PC-3 (cell line): ENCODE measurements at regions of chr10 and their contacts with region 1.

Region 1: GRCh38 chr10:45023426-45023825 is 22.7 kb downstream of the ZNF22 start:
- DNase-seq: no peak
- ATAC-seq: no peak
- H3K4me3 ChIP-seq: no peak overlapping the region
- H3K27ac ChIP-seq: no peak overlapping the region
- H3K4me1 ChIP-seq: no peaks in the 10 kb centered on the region
- H3K27me3 ChIP-seq: peaks cover 6% of the 10 kb centered on the region; the same call in 1 of the 2 replicates
- CTCF ChIP-seq: no peak

Region 2: DNA sequence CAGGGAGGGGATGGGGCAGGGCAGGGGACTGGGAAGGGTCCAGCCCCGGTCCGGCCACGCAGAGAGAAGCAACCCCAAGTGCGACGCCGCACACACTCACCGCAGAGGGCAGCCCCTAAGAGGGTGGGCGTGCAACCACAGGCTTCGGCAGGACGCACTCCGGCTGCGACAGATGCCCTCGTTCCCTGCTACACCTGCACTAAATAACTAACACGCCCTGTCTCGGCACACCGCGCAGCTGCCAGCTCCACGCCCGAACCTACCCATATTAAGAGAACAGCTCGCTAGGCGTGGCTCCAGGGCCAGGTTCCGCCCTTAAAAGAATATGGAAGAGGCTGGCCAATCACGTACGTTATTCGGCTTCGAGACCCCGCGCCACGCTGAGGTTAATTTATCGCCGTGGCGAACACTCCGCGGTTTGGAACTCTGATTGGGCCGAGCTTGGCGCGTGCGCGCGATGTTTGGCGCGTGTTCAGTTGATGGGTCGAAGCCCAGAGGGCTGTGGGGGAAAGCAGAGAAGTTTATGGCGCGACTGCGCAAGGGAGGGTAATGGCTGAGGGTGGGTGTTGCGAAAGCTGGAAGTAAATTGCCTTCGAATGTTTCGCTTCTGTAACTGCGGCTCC is 200.9 kb after region 1 on chr10:
- CTCF ChIA-PET with region 1: no interaction called
- POLR2A ChIA-PET with region 1: interaction called, 12 read pairs
- intact Hi-C with region 1: no loop called
- DNase-seq: no peak
- ATAC-seq: no peak
- H3K4me3 ChIP-seq: no peak overlapping the region
- H3K27ac ChIP-seq: no peak overlapping the region
- H3K4me1 ChIP-seq: no peaks in the 10 kb centered on the region
- H3K27me3 ChIP-seq: peaks cover 33% of the 10 kb centered on the region; the same call in 1 of the 2 replicates
- CTCF ChIP-seq: no peak

Region 3: DNA sequence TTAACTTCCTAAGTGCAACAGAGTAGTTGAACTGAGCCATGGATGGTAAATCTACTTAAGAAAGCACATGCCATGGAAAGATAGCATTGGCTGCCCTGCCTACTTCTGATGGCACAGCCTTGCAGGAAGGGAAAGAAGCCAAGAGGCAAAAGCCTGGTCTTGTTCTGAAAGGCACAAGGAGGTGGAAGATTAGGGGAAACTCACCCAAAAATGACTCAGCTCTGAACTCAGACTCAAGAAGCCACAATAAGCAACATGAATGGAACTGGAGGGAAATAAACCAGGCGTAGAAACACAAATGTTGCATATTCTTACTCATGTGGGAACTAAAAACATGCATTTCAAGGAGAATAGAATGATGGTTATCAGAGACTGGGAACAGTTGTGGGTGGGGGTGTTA is 329.8 kb after region 1 on chr10:
- CTCF ChIA-PET with region 1: no interaction called
- POLR2A ChIA-PET with region 1: no interaction called
- intact Hi-C with region 1: no loop called
- DNase-seq: no peak
- ATAC-seq: no peak
- H3K4me3 ChIP-seq: no peak overlapping the region
- H3K27ac ChIP-seq: no peak overlapping the region
- H3K4me1 ChIP-seq: no peaks in the 10 kb centered on the region
- H3K27me3 ChIP-seq: peaks cover 44% of the 10 kb centered on the region
- CTCF ChIP-seq: no peak